ENCODE measurements at regions of chr3 and their contacts with region 1.

Region 1: GRCh38 chr3:24185738-24186384 is 240.8 kb downstream of the NR1D2 start:
- DNase-seq: peak; percentile 10
- H3K4me3 ChIP-seq: no peak overlapping the region
- CTCF ChIP-seq: peak; percentile 64

Region 2: GRCh38 chr3:23999012-23999641 is 186.7 kb before region 1 on chr3:
- CTCF ChIA-PET with region 1: interaction called, 11 read pairs
- POLR2A ChIA-PET with region 1: no interaction called
- DNase-seq: no peak
- H3K4me3 ChIP-seq: no peak overlapping the region
- CTCF ChIP-seq: peak; percentile 83

Region 3: GRCh38 chr3:24156465-24156864 is 29.4 kb before region 1 on chr3:
- CTCF ChIA-PET with region 1: interaction called, 18 read pairs
- POLR2A ChIA-PET with region 1: no interaction called
- DNase-seq: no peak
- H3K4me3 ChIP-seq: no peak overlapping the region
- CTCF ChIP-seq: no peak

Region 4: DNA sequence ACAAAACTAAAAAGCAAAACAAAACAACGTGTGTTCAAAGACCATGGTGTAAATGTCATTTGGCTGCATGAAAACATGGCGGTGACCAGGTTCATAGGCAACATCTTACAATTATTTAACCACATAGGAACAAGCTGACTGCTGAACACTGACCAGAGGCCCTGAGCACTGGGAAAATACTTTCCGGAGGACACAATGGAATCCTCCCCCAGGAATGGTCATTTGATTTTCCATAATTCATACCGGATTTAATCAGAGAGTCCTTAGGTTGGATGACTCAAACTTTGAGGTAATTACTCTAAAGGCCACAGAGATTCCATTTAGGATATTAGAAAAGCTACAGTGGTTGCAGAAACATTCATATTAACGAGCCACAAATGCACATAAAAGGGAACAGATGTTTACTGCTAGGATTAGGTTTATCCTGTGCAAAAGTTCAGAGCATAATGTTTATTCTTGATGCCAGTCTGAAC is 13.9 kb after region 1 on chr3:
- CTCF ChIA-PET with region 1: interaction called, 19 read pairs
- POLR2A ChIA-PET with region 1: no interaction called
- DNase-seq: peak; percentile 26
- H3K4me3 ChIP-seq: no peak overlapping the region
- CTCF ChIP-seq: no peak

Region 5: GRCh38 chr3:24237971-24238767 is 52.3 kb after region 1 on chr3:
- CTCF ChIA-PET with region 1: interaction called, 61 read pairs
- POLR2A ChIA-PET with region 1: interaction called, 3 read pairs
- DNase-seq: peak; percentile 89
- H3K4me3 ChIP-seq: no peak overlapping the region
- CTCF ChIP-seq: peak; percentile 79

Measured in AG04449 (cell line).